ENCODE measurements at regions of chr19 and their contacts with region 1.

Region 1: DNA sequence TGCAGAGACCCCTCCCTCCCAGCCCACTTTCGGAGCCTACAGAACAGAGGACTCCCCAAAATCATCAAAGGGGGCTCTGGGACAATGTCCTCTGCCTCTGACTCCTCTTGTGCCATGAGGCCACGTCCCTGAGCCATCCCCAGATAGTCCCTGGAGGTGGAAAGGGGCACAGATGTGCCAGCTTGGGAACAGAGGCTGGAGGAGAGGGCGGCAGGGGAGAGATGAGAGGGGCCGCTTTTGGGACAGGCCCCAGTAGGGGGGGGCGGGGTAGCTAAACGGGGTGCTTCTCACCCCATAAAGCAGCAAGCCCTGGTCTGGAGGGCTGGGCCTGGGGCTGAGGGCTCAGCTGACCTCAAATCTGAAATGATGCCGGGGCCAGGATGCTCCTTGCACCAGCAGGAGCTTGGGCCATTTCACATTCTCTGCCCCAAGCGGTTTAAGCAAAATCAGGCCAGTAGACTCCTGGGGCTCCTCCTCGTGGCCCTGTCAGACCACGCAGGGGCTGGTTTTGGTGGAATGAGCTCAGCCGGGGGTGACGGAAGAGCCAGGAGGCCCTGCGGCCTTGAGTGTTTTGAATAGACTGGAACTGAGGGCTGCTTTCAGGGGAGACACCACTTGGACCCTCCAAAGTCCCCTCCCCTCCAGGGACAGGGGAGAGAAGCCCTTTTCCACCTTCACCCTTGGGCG is 27.1 kb downstream of the ONECUT3 start:
- H3K4me3 ChIP-seq: no peak overlapping the region
- H3K27ac ChIP-seq: no peak overlapping the region
- H3K4me1 ChIP-seq: no peaks in the 10 kb centered on the region
- CTCF ChIP-seq: no peak

Region 2: DNA sequence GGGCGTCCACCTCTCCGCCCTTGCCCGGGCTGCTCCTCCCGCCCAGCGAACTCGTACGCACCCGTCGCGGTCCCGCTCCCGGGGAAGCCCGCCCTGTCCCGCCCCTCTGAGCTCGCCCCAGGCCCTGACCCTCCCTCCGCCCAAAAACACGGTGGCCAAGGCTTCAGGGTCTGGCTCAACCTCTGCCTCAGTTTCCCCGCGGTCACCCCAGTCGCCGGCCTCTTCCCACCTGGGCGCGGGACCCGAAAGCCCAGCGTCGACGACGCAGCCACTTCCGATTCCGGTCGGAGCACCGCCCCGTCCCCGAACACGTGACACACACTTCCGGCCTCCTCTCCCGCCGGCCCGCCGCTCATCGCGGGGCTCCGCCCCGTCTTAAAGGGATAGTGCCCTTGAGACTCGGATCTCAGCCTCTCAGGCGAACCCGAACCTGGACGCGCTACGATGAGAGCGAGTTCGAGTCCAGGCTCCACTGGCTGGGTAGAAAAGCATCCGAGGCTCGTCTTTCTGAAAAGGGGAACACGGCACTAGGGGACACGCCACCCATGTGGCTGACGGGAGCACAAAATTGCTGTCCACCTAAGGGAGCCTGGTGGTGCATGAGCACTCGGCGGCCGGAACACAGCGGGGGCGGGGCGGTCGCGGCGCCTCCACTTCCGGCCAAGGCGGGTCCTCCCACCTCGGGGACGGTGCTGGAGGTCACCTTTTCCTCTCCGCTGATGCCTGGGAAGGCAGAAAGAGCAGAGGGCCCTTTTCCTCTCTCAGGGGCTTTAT is 301.3 kb before region 1 on chr19 and contains the start of gene C19orf25:
- CTCF ChIA-PET with region 1: no interaction called
- POLR2A ChIA-PET with region 1: no interaction called
- H3K4me3 ChIP-seq: peak within 1 kb of the TSS; percentile 60
- H3K27ac ChIP-seq: peak within 1 kb of the TSS; percentile 90
- H3K4me1 ChIP-seq: no peaks in the 10 kb centered on the region
- CTCF ChIP-seq: 0 out of 2 replicates have a peak, but pooled peaks have one; percentile 11

Region 3: GRCh38 chr19:1663852-1664251 is 116.6 kb before region 1 on chr19:
- CTCF ChIA-PET with region 1: no interaction called
- POLR2A ChIA-PET with region 1: no interaction called
- H3K4me3 ChIP-seq: no peak overlapping the region
- H3K27ac ChIP-seq: no peak overlapping the region
- H3K4me1 ChIP-seq: no peaks in the 10 kb centered on the region; the same call in 1 of the 2 replicates
- CTCF ChIP-seq: no peak

Region 4: GRCh38 chr19:1767464-1767933 is 12.9 kb before region 1 on chr19:
- CTCF ChIA-PET with region 1: interaction called, 35 read pairs
- POLR2A ChIA-PET with region 1: no interaction called
- H3K4me3 ChIP-seq: no peak overlapping the region
- H3K27ac ChIP-seq: no peak overlapping the region
- H3K4me1 ChIP-seq: no peaks in the 10 kb centered on the region
- CTCF ChIP-seq: peak; percentile 84

Region 5: GRCh38 chr19:1794424-1795172 is 14.2 kb after region 1 on chr19:
- CTCF ChIA-PET with region 1: interaction called, 33 read pairs
- POLR2A ChIA-PET with region 1: interaction called, 7 read pairs
- H3K4me3 ChIP-seq: no peak overlapping the region
- H3K27ac ChIP-seq: no peak overlapping the region
- H3K4me1 ChIP-seq: no peaks in the 10 kb centered on the region
- CTCF ChIP-seq: no peak